Activated T-helper 1 cell treated with anti-CD3 and anti-CD28 coated beads, Interleukin-12 subunit alpha, Interleukin-12 subunit beta, Interleukin-2, Interleukin-4 antibody, amounts not matched to agents 30 ng/mL and 10 ng/mL and 1 ng/mL, durations not matched to agents 14 hours and 24 hours and 36 hours (primary cell): ENCODE measurements at regions of chr6 and their contacts with region 1.

Region 1: DNA sequence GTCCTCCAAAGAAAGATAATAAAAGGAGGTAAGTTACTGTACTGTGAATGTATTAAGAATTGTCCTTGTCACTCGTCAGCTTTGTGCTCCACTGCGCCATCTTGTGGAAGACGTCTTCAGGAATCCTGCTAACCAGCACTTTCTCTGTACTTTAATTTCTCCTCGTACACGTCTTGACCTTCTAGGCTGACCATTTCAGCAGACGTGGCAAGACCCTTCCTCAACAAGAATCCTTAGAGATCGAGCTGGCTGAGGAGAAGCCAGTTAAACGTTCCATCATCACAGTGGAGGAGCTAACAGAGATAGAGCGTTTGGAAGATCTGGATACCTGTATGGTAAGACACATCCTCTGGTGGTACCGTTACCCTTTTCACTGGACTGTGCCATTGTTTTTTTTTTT is 95.5 kb upstream of the SCGN start:
- DNase-seq: peak; percentile 52
- H3K4me3 Mint-ChIP-seq: no peak overlapping the region
- H3K27ac Mint-ChIP-seq: no peak overlapping the region
- H3K4me1 Mint-ChIP-seq: no peaks in the 10 kb centered on the region
- H3K27me3 Mint-ChIP-seq: peaks cover 3% of the 10 kb centered on the region

Region 2: DNA sequence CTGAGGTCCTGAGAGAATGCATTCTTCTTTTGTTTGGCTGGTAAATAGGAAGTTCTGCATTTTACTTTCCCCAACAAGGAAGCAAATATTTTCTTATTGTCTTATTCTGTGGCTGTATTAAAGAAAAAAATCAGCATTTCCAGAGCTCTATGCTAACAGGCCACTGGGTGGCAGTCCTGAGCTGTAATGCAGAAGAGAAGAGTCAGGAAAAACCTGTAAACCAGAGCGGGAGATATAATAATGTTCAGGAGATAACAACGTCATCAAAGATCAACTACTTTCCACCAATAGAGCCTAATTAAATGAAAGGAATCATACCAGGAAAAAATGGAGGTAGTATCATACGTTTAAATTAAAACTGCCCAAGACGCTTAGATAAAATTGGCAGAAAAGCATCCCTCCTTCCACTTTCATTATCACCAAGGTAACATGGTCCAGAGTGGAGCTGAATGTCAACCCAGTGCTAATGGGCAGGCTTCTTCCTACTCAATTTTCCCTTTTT is 333.0 kb before region 1 on chr6:
- intact Hi-C with region 1: loop called (anchors 1 kb)
- DNase-seq: peak; percentile 24
- H3K4me3 Mint-ChIP-seq: peak overlapping the region; percentile 79
- H3K27ac Mint-ChIP-seq: no peak overlapping the region
- H3K4me1 Mint-ChIP-seq: peaks cover 14% of the 10 kb centered on the region
- H3K27me3 Mint-ChIP-seq: no peaks in the 10 kb centered on the region

Region 3: DNA sequence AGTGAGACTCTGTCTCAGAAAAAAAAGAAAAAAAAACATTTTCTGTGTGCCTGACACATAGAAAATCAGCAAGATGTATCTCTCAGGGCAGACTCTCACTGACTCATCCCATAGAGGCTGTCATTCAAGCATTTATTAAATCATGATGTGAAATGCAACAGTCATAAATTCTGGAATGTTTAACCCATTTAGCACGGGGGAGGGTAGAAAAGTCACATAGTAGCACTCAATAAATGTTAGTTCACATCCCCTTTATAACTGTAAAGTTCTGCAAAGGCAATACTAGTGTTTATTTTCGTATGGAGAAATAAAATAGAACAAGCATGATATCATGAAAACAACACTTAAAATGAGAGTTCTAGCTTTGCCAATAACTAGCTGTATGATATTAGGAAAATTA is 292.9 kb before region 1 on chr6:
- intact Hi-C with region 1: loop called (anchors 1 kb)
- DNase-seq: no peak
- H3K4me3 Mint-ChIP-seq: no peak overlapping the region
- H3K27ac Mint-ChIP-seq: no peak overlapping the region
- H3K4me1 Mint-ChIP-seq: peaks cover 7% of the 10 kb centered on the region
- H3K27me3 Mint-ChIP-seq: peaks cover 26% of the 10 kb centered on the region